Prostate gland (tissue), 2 donors: ENCODE measurements at regions of chr6 and their contacts with region 1.

Region 1: GRCh38 chr6:16168858-16169257 is 40.0 kb downstream of the MYLIP start:
- DNase-seq: no peak
- H3K4me3 ChIP-seq: no peak overlapping the region
- H3K27ac ChIP-seq: no peak overlapping the region
- H3K4me1 ChIP-seq: no peaks in the 10 kb centered on the region
- H3K27me3 ChIP-seq: no peaks in the 10 kb centered on the region
- CTCF ChIP-seq: peak in 2 of 4 experiments; percentile 25 to 33
- POLR2A ChIP-seq: no peak

Region 2: DNA sequence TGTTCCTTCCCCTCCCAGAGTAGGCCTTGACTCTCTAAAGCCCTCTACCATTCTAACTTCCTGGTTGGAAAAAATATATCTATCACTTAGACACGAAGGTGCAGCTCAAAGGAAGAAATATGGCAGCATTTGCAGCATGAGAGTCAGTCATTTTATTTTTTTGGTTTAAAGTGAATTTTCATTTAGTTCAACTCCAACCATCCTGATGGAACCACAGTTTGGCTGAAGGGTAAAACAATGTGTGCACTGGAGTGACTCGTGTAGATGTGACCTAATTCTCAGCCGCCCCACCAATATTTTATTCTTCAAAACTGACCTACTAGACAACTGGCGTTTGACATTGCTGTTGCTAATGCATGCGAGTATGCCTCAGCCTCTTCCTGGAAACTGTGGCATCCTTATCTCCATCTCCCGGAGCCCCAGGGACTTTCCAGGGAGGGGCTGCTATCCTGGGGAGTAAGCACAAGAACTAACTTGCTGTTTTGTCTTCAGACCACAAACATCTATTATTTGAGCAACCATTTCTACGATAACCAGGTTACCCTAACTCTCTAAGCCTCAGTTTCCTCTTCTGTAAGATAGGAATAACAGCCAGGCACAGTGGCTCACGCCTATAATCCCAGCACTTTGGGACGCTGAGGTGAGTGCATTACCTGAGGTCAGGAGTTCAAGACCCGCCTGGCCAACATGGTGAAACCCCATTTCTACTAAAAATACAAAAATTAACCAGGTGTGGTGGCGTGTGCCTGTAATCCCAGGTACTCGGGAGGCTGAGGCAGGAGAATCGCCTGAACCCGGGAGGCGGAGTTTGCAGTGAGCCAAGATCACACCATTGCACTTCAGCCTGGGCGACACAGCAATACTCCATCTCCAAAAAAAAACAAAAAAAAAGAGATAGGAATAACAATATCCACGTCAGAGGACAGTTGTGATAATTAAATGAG is 1071.7 kb before region 1 on chr6:
- intact Hi-C with region 1: no loop called
- DNase-seq: no peak
- H3K4me3 ChIP-seq: no peak overlapping the region
- H3K27ac ChIP-seq: no peak overlapping the region
- H3K4me1 ChIP-seq: no peaks in the 10 kb centered on the region
- H3K27me3 ChIP-seq: no peaks in the 10 kb centered on the region
- CTCF ChIP-seq: no peak
- POLR2A ChIP-seq: no peak

Region 3: DNA sequence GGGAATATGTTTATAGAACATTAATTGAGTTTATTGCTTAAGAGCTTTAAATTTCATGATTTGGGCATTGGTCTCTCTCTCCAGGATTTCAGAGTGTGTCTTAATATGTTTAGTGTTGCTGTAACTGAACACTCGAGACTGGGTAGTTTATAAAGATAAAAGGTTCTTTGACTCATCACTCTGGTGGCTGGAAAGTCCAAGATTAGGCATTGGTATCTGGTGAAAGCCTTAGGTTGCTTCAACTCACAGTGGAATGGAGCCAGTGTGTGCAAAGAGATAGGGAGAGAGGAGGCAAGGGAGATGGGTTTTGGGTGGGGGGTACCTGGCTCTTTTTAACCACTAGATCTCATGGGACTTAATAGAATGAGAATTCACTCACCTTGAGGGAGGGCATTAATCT is 470.4 kb before region 1 on chr6:
- intact Hi-C with region 1: loop called (anchors 5 kb)
- DNase-seq: no peak
- H3K4me3 ChIP-seq: no peak overlapping the region
- H3K27ac ChIP-seq: no peak overlapping the region
- H3K4me1 ChIP-seq: no peaks in the 10 kb centered on the region
- H3K27me3 ChIP-seq: no peaks in the 10 kb centered on the region
- CTCF ChIP-seq: no peak
- POLR2A ChIP-seq: no peak

Region 4: DNA sequence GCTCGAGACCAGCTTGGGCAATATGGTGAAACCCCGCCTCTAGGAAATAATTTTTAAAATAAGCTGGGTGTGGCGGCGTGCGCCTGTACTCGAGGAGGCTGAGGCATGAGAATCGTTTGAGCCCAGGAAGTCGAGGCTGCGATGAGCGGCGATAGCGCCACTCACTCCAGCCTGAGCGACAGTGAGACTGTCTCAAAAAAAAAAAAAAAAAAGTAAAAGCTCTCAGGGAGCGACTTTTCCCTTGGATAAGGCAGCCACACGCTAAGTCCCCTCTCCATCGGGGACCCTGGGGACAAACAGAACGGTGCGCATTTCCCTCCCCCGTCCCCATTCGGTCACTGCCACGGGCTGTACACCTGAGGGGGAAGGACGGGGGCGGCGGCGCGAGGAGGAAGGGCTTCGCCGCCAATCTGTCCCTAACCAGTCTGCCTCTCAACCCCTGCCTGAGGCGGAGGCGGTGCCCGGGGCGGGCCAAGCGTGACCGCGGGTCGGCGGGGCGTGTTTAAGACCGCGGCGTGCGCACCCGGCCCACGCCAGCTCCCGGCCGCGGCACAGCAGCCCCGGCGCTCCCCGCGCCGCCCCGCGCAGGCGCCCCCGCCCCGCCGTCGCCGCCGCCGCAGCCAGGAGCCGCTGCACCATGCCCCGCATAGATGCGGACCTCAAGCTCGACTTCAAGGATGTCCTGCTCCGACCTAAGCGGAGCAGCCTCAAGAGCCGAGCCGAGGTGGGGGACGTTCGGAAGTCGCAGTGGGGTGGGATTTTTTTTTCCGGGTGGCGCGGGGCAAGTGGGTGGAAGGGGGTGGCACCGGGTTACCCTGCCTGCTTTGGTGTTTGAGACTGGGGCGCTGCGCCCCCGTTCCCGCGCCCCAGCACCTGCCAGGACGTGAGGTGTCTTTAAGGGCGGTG is 69.5 kb after region 1 on chr6 and contains the start of gene GMPR:
- intact Hi-C with region 1: no loop called
- DNase-seq: peak; percentile 79
- H3K4me3 ChIP-seq: peak within 1 kb of the TSS; percentile 53 to 55
- H3K27ac ChIP-seq: peak within 1 kb of the TSS; percentile 83 to 86
- H3K4me1 ChIP-seq: peaks cover 10% of the 10 kb centered on the region
- H3K27me3 ChIP-seq: no peaks in the 10 kb centered on the region
- CTCF ChIP-seq: peak in 1 of 4 experiments; percentile 16
- POLR2A ChIP-seq: peak; percentile 59
- total RNA-seq, gene GMPR: 228 to 266 TPM